Left cardiac atrium (tissue), 4 donors: ENCODE measurements at regions of chr5 and their contacts with region 1.

Region 1: GRCh38 chr5:16934123-16934522 is 2.0 kb downstream of the MYO10 start:
- DNase-seq: peak; percentile 52
- ATAC-seq: peak in 1 of 2 donors; percentile 34

Region 2: DNA sequence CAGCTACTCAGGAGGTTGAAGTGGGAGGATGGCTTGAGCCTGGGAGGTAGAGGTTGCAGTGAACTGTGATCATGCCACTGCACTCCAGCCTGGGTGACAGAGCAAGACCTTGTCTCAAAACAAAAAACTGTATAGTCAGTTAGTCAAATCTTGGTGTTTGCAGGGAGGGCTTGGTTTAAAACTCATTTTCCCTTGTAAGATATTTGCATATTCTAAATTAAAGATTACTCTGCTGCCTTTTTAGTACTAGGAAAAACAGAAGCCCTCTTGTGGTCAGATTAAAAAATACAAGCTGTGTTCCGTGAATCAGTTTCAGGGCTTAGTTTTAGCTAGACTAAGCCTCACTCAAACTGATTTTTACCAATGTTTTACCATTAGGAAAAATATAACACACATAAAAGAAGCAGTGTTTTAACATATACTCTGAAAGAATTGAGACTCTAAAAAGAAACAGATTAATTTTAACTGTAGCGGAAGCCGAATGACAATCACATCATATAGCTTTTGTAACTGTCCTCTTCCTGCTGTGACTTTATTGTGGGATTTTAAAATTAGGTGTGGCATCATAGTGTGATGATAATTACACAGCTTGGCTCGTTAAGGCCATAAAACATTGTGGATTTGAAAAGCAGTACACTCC is 198.4 kb after region 1 on chr5:
- intact Hi-C with region 1: loop called (anchors 5 to 10 kb)
- DNase-seq: no peak
- ATAC-seq: no peak

Region 3: GRCh38 chr5:17189381-17190036 is 255.4 kb after region 1 on chr5:
- intact Hi-C with region 1: loop called in 1 of 2 experiments (anchors 5 kb)
- DNase-seq: peak; percentile 83
- ATAC-seq: peak; percentile 56 to 71